ENCODE measurements at regions of chr15 and their contacts with region 1.

Region 1: DNA sequence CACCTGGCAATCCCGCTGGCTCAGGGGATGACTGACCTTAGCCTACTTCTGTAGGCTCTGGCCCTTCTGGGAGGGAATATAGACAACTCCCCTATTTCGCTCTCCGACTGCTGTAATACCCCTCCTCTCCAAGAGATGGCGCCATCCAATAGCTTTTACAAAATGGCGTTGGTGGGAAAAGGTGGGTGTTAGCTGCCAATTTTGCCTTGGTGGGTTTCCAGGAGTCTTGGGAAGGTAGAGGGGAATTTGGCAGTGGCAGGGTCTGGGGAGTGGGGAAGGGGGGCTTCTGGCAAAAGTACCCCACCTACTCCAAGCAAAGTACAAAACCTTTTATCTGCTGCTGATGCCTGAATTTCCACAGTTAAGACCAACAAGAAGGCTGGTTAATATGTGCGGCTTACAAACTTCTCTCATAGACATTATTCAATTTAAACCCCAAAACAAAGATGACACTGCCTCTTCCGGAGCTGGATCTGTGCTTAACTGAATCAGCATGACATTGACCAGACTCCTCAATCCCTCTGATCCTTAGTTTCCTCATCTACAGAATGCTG is 62.1 kb downstream of the RASGRF1 start:
- DNase-seq: peak; percentile 51
- ATAC-seq: no peak
- H3K4me3 Mint-ChIP-seq: no peak overlapping the region
- H3K27ac Mint-ChIP-seq: no peak overlapping the region
- H3K4me1 Mint-ChIP-seq: no peaks in the 10 kb centered on the region
- H3K27me3 Mint-ChIP-seq: no peaks in the 10 kb centered on the region

Region 2: DNA sequence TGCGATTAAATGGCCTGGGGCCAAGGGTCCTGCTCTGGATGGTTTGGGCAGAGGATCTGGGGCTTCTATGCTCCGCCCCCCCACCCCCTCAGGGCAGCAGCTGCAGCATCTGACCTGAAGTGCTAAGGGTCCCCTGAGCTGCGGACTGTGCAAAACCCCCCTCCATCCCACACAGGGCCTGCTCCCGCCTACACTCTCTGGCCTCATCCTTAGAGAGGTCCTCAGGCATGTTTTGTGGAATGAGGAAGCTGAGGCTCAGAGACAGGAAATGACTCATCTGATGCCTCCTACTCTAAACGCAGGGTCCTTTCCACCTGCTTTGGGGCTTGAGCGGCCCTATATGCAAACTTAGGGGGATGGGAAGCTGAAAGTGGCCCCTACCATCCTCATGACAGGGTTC is 24.2 kb before region 1 on chr15:
- CTCF ChIA-PET with region 1: interaction called, 10 read pairs
- POLR2A ChIA-PET with region 1: no interaction called
- DNase-seq: peak; percentile 27
- ATAC-seq: peak; percentile 52
- H3K4me3 Mint-ChIP-seq: no peak overlapping the region
- H3K27ac Mint-ChIP-seq: peak overlapping the region; percentile 50
- H3K4me1 Mint-ChIP-seq: peaks cover 15% of the 10 kb centered on the region
- H3K27me3 Mint-ChIP-seq: peaks cover 2% of the 10 kb centered on the region

Region 3: GRCh38 chr15:79184465-79184892 is 156.0 kb after region 1 on chr15:
- CTCF ChIA-PET with region 1: interaction called, 127 read pairs
- POLR2A ChIA-PET with region 1: interaction called, 4 read pairs
- DNase-seq: peak; percentile 75
- ATAC-seq: no peak
- H3K4me3 Mint-ChIP-seq: no peak overlapping the region
- H3K27ac Mint-ChIP-seq: no peak overlapping the region
- H3K4me1 Mint-ChIP-seq: no peaks in the 10 kb centered on the region
- H3K27me3 Mint-ChIP-seq: no peaks in the 10 kb centered on the region

Region 4: DNA sequence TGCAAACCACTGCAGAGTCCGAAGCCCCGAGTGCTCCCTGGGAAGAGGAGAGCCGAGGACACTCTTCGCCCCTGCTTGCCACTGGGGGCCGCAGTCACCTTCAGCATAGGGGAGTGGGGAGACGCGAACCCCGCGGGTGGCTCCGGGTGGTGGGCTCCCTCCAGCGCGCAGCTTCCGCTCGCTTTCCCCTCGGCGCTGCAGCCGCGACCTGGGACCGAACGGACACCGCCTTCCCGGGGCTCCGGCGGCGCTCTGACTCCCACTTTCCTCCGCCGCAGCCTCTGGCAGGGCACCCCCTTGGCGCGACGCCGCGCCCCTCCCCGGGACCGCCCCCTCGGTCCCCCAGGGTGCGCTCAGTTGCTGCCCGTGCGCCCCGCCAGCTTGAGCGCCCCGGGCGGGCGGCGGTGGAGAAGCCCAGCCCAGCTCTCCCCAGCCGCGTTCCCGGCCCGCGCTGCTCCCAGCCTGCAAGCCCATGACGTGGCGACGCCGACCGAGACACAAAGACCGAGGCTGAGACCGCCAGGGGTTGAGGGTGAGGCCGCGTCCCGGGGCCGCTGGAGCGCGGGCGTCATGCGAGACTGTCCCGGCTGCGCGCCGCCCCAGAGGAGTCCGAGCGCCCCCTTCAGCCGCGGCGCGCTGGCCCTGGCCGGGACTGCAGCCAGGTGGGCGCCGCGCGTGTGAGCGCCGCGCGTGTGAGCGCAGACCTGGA is 403.3 kb after region 1 on chr15 and contains the start of gene MINAR1:
- CTCF ChIA-PET with region 1: no interaction called
- POLR2A ChIA-PET with region 1: no interaction called
- DNase-seq: no peak
- ATAC-seq: peak; percentile 51
- H3K4me3 Mint-ChIP-seq: peak within 1 kb of the TSS; percentile 19
- H3K27ac Mint-ChIP-seq: no peak within 1 kb of the TSS
- H3K4me1 Mint-ChIP-seq: peaks cover 8% of the 10 kb centered on the region
- H3K27me3 Mint-ChIP-seq: peaks cover 65% of the 10 kb centered on the region
- total RNA-seq, gene MINAR1: 0.57 to 0.71 TPM